PC-9 (cell line): ENCODE measurements at regions of chr11 and their contacts with region 1.

Region 1: GRCh38 chr11:123145220-123145619 is 49.8 kb downstream of the CLMP start:
- DNase-seq: peak; percentile 62 to 99
- H3K4me3 ChIP-seq: peak overlapping the region; percentile 42; the same call in 1 of the 2 replicates
- H3K27ac ChIP-seq: peak overlapping the region; percentile 96
- H3K4me1 ChIP-seq: peaks cover 45% of the 10 kb centered on the region
- H3K27me3 ChIP-seq: no peaks in the 10 kb centered on the region
- CTCF ChIP-seq: no peak

Region 2: DNA sequence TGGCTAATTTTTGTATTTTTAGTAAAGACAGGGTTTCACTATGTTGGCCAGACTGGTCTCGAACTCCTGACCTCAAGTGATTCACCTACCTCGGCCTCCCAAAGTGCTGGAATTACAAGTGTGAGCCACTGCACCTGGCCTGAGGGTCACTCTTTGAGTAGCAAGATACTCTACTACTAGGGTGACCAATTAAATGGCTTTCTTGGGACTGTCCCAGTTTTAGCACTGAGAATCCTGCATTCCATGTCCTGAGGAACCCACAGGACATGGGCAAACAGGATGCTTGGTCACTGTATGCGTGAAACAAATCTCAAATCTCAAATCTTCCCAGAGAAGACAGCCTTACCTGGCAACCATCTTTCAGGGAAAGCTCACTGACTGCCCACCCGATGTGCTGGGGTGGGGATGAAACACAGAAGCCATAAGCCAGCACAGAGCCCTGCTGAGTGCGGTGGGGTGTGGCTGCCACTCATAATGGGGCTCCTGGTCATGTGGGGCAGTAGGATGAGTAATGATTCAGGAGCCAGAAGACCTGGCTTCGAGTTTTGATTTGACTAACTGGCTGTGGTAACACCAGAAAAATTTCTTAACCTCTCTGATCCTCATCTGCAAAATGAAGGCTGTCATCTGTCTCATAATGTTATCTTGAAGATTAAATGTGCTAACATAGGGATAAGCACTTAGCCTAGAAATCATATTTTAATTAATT is 38.3 kb after region 1 on chr11:
- CTCF ChIA-PET with region 1: no interaction called
- POLR2A ChIA-PET with region 1: no interaction called
- intact Hi-C with region 1: loop called (anchors 5 kb)
- DNase-seq: peak in 1 of 2 experiments; percentile 57
- H3K4me3 ChIP-seq: no peak overlapping the region
- H3K27ac ChIP-seq: peak overlapping the region; percentile 2; the same call in 1 of the 2 replicates
- H3K4me1 ChIP-seq: peaks cover 90% of the 10 kb centered on the region
- H3K27me3 ChIP-seq: no peaks in the 10 kb centered on the region
- CTCF ChIP-seq: no peak